ENCODE measurements at regions of chr1 and their contacts with region 1.

Region 1: DNA sequence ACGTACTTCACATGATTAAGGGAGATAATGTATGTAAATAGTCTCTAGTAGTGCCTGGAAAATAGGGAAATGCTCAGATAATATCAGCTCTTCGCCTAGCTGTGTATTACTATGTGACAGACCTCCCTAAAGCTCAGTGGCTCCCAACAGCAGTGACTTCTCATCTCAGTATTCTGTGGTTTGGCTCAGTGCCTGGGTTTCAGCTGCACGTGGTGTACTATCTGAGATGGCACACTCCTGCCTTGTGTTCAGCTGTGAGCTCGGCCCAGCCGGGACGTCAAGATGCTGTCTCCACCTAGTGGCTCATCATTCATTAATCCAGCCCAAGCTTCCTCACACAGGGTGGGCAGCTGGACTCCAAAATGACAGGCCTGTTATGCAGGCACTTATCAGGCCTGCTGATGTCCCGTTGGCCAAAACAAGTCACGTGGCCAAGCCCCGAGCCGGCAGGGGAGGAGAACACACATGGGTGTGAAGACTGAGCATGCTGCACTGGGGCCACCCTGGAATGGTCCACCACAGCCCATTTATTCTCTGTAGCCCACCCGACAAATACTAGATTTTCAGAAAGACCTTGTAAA is 17.8 kb downstream of the SLFNL1 start:
- DNase-seq: peak; percentile 45
- ATAC-seq: peak; percentile 95
- H3K4me3 Mint-ChIP-seq: no peak overlapping the region
- H3K27ac Mint-ChIP-seq: peak overlapping the region; percentile 19
- H3K4me1 Mint-ChIP-seq: peaks cover 15% of the 10 kb centered on the region
- H3K27me3 Mint-ChIP-seq: no peaks in the 10 kb centered on the region
- CTCF ChIP-seq: no peak

Region 2: DNA sequence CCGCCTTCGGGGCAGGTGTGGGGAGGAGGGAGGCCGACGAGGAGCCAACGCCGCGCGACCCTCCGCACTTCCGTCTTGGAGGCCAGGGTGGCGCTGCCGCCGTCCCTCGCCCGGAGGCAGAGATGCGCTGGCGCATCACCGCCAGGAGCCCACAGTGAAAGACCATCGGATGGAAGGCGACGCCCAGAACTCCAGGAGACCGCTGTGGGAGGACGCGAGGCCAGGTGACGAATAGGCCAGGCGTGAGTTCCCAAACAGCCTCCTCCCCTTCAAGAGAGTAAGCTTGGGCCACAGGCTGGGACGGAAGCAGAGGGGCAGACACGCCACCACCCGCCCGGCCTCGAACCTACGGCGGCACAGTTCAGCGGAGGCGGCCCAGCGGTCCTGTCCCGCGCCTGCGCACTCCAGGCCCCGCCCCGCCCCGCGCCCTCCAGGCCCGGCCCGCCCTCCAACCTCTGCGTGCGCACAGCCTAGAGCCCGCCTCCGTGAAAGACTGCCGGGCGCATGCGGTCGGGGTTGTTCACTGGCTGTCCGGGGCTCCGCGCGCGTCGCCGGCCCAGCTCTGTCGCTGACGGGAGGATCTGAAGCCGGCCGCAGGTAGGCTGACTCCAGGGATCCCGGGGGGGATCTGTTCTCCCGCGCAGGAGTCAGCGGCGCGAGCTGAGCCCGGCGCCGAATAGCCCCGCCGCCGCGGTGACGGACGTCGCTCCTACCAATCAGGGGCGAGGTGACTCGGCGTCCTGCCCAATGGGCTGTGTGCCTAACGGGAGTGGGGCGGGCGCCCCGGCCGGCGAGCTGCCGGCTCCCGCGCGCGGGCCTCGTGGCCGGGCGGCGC is 24.3 kb before region 1 on chr1 and contains the start of gene CTPS1:
- CTCF ChIA-PET with region 1: interaction called, 4 read pairs
- POLR2A ChIA-PET with region 1: interaction called, 16 read pairs
- intact Hi-C with region 1: loop called (anchors 1 kb)
- DNase-seq: peak; percentile 95
- ATAC-seq: peak; percentile 86
- H3K4me3 Mint-ChIP-seq: peak within 1 kb of the TSS; percentile 94
- H3K27ac Mint-ChIP-seq: peak within 1 kb of the TSS; percentile 92
- H3K4me1 Mint-ChIP-seq: peaks cover 19% of the 10 kb centered on the region
- H3K27me3 Mint-ChIP-seq: no peaks in the 10 kb centered on the region
- CTCF ChIP-seq: no peak
- total RNA-seq, gene CTPS1: 39.5 and 43.0 TPM in 2 replicates

Region 3: DNA sequence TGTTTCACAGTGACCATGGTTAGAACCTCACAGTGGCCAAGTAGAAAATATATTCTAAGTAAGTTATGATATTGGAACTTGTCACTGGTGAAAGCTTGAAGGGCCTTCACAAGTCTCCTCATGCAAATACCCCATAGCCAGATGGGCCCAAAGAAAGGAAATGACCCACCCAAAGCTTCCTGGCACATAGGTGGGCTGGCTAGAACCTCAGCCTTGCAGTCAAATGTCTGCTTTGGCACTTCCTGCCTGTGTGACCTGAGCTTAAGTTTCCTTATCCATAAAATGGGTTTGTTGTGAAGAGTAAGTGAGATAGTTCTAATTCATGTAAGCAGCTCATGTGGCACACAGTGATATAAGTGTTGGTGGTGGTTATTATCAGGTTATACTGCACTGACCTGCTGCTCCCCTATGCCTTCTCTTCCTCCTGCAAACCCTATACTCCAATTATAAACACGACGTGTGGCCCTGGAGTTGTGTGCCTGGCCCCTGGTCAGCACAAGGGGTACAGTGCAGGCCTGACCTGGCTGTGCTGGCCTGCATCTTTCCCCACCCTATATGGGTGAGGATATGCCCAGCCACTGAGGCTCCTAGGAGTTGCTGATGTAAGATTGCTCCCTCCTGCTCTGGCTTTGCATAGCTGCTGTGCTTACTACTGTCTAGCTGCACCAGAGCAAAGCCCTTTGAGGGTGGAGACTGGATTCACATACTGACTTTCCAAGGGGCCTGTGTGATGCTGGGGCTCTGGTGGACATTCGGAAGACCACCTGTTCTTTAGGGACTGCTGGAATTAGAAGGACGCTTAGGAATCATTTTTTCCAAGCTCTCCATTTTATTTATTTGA is 22.5 kb after region 1 on chr1:
- CTCF ChIA-PET with region 1: no interaction called
- POLR2A ChIA-PET with region 1: no interaction called
- intact Hi-C with region 1: no loop called
- DNase-seq: no peak
- ATAC-seq: peak; percentile 50
- H3K4me3 Mint-ChIP-seq: peak overlapping the region; percentile 29
- H3K27ac Mint-ChIP-seq: peak overlapping the region; percentile 74
- H3K4me1 Mint-ChIP-seq: peaks cover 32% of the 10 kb centered on the region
- H3K27me3 Mint-ChIP-seq: no peaks in the 10 kb centered on the region
- CTCF ChIP-seq: no peak